ENCODE measurements at regions of chr1 and their contacts with region 1.

Region 1: GRCh38 chr1:179278920-179279319 is 14.7 kb upstream of the SOAT1 start:
- DNase-seq: no peak
- ATAC-seq: no peak
- H3K4me3 ChIP-seq: no peak overlapping the region
- H3K27ac ChIP-seq: no peak overlapping the region
- H3K4me1 ChIP-seq: no peaks in the 10 kb centered on the region
- H3K27me3 ChIP-seq: no peaks in the 10 kb centered on the region
- CTCF ChIP-seq: no peak

Region 2: DNA sequence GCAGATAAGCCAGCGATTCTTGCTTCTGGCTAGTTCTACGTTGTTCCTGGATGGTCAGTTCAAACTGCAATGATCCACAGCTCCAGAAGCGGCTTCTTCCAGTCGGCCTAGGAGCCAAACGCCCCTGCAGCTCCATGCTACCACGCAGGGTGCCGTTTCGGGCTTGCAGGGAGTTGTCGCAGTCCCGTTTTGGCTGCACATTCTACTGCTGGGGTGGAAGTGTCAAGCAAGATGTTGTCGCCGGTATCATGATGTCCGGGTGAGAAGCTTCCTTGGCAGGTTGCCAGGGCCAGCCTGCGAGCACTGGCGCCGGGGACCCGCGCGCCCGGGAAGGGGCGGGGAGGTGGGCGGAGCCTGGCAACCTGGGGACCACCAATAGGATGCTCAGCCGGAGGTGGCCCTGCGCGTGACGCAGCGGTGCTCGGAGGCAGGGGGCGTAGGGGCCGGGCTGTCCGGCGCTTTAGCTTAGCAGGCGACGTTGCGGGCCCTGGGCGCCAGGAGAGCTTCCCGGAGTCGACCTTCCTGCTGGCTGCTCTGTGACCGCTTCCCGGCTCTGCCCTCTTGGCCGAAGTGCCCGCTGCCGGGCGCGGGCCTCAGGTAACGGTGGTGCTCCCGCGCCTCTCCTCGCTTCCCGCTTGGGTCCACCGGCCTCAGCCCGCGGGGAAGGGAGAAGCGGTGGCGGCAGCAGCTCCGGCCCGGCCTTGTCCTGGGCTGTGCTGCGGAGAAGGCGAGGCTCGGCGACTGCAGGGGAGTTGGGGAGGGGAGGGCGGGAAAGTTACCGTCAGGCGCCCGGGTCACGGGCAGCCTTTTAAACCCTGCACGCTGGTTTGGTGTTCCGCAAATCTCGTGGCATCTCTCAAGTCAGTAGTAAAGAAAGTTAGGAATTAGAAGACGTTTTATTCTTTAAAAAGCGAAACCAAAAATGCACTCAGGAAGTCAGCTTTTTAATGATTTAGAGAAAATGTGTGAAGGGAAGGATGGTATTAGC is 14.7 kb after region 1 on chr1 and contains the start of gene SOAT1:
- CTCF ChIA-PET with region 1: no interaction called
- POLR2A ChIA-PET with region 1: no interaction called
- in situ Hi-C with region 1: no loop called
- intact Hi-C with region 1: no loop called
- DNase-seq: peak; percentile 43
- ATAC-seq: peak; percentile 98
- H3K4me3 ChIP-seq: peak within 1 kb of the TSS; percentile 69 to 79
- H3K27ac ChIP-seq: peak within 1 kb of the TSS; percentile 90
- H3K4me1 ChIP-seq: peaks cover 23% of the 10 kb centered on the region
- H3K27me3 ChIP-seq: no peaks in the 10 kb centered on the region
- CTCF ChIP-seq: no peak; the same call in none of the 2 replicates
- total RNA-seq, gene SOAT1: 57.2 TPM

Region 3: GRCh38 chr1:180745098-180745497 is 1466.2 kb after region 1 on chr1:
- CTCF ChIA-PET with region 1: no interaction called
- POLR2A ChIA-PET with region 1: interaction called, 19 read pairs
- in situ Hi-C with region 1: no loop called
- intact Hi-C with region 1: no loop called
- DNase-seq: no peak
- ATAC-seq: no peak
- H3K4me3 ChIP-seq: no peak overlapping the region
- H3K27ac ChIP-seq: no peak overlapping the region
- H3K4me1 ChIP-seq: no peaks in the 10 kb centered on the region
- H3K27me3 ChIP-seq: no peaks in the 10 kb centered on the region
- CTCF ChIP-seq: no peak